Naive thymus-derived CD8-positive, alpha-beta T cell (primary cell): ENCODE measurements at regions of chr12 and their contacts with region 1.

Region 1: DNA sequence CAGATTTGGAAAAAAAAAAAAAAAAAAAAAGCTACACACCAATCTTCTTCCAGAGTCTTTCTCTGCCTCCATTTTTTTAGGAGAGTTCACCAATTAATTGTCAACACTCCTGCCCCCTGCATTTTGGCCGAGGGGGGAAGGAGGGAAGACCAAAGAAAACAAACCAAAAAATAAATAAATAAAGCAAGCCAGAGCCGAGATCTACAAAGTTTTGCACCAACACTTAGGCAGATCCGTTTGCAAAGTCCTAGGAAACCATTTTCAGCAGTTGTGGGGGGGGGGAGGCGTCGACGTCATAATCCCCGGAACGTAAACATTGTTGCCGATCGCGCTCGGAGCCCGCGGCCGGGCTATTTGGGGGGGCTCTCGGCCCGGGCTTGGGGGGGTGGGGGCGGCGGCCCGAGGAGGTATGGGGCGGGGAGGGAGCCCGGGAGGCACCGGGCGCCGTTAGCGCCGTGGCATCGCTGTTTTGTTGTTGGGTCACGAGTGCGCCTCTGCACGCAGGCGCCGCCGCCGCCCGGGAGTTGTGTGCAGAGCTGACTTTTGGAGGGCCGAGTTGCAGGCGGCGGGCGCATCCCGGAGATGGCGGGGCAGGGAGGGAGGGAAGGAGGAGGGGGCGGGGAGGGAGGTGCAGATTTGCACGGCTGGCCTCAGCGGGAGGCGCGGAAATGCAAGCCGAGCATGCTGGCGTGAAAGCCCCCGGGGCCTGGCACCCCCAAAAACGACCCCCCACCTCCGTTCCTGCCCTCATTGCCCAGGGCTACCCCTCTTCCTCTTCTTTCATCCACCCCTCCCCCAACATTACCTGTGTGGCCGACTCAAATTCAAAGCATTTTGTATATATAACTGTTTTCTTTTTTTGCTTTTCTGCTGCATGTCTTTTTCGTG is 598 bp downstream of the KDM2B start:
- DNase-seq: peak; percentile 59 to 88 (median 70)
- ATAC-seq: peak; percentile 65 to 66
- H3K4me3 Mint-ChIP-seq: peak overlapping the region; percentile 95 to 99 (median 97)
- H3K27ac Mint-ChIP-seq: peak overlapping the region; percentile 91 to 100 (median 99)
- H3K4me1 Mint-ChIP-seq: peaks cover 20 to 45% (median 36%) of the 10 kb centered on the region in 4 donors
- H3K27me3 Mint-ChIP-seq: no peaks in the 10 kb centered on the region

Region 2: DNA sequence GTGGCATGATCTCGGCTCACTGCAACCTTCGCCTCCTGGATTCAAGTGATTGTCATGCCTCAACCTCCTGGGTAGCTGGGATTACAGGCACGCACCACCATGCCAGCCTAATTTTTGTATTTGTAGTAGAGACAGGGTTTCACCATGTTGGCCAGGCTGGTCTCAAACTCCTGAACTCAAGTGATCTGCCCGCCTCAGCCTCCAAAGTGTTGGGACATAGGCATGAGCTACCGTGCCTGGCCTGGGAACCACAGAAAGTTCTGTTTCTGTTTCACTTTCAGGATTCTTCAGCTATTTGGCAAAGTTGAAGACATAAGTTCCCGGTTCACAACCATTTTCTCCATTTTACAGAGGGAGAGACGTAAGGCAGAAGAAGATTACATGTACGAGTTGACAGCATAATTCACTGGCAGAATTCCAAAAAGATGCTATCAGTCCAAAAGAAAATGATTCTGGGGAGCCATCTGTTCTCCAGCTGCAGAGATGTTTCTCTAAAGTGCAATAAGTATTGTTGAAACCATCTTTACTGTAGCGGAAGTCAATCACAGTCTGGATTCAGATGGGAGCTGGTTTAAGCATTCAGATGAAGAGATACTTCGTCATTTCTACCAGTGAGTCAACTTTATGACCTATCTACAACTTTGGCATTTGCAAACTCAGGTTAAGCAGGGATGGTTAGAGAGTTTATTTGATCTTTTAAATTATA is 188.5 kb before region 1 on chr12:
- POLR2A ChIA-PET with region 1: no interaction called
- DNase-seq: no peak
- ATAC-seq: no peak
- H3K4me3 Mint-ChIP-seq: peak overlapping the region in 7 of 10 donors; percentile 2 to 63 (median 21)
- H3K27ac Mint-ChIP-seq: peak overlapping the region in 4 of 10 donors; percentile 11 to 58 (median 41)
- H3K4me1 Mint-ChIP-seq: peaks cover 2 to 10% (median 6%) of the 10 kb centered on the region in 4 donors
- H3K27me3 Mint-ChIP-seq: no peaks in the 10 kb centered on the region

Region 3: DNA sequence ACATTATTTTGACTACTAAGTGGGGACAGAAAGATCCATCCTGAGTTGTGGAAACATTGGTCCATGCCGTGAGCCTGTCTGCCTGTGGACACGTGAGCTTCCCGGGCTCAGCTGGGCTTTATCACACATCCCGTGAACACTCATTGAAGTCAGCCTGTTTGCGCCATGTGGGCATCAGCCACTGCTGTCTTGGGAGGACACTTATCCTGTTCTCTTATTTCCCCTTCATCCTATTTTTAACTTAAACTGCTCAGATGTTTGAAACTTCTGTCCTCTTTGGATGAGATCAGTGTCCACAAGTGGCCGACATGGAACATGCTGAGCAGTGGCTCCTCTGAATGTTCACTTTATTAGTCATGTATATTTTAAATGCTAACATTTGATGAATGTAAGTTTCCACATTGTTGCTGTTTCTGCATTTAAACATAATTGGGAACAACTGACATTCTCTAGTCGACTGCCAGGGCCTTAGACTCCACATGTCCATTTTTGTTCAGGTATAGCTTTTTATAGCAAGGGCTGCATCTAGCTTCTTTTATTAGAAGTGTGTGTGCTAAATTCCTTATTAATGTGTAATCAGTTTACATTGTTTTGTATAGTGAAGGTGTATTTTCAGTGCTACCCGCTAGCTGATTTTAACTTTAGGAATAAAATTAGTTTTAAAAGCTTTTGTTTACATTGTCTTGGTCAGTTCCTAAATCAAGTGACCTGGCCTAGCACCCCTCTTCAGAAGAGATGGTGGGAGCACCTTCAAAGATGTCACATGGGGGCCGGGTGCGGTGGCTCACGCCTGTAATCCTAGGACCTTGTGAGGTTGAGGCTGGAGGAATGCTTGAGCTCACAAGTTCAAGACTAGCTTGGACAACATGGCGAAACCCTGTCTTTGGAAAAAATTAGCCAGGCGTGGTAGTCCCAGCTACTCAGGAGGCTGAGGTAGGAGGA is 156.3 kb before region 1 on chr12:
- POLR2A ChIA-PET with region 1: no interaction called
- DNase-seq: no peak
- ATAC-seq: no peak
- H3K4me3 Mint-ChIP-seq: no peak overlapping the region
- H3K27ac Mint-ChIP-seq: peak overlapping the region in 8 of 10 donors; percentile 2 to 77 (median 47)
- H3K4me1 Mint-ChIP-seq: peaks cover 6 to 14% (median 11%) of the 10 kb centered on the region in 4 donors
- H3K27me3 Mint-ChIP-seq: no peaks in the 10 kb centered on the region

Region 4: GRCh38 chr12:121443193-121443870 is 136.9 kb before region 1 on chr12:
- POLR2A ChIA-PET with region 1: no interaction called
- DNase-seq: peak in 9 of 10 donors; percentile 31 to 61 (median 55)
- ATAC-seq: peak; percentile 76 to 89
- H3K4me3 Mint-ChIP-seq: no peak overlapping the region
- H3K27ac Mint-ChIP-seq: peak overlapping the region in 4 of 10 donors; percentile 40 to 78 (median 65)
- H3K4me1 Mint-ChIP-seq: peaks cover 2 to 10% (median 7%) of the 10 kb centered on the region in 4 donors
- H3K27me3 Mint-ChIP-seq: no peaks in the 10 kb centered on the region

Region 5: GRCh38 chr12:121536899-121537813 is 43.1 kb before region 1 on chr12:
- POLR2A ChIA-PET with region 1: interaction called, 44 read pairs
- DNase-seq: peak; percentile 31 to 74 (median 51)
- ATAC-seq: peak in 1 of 2 donors; percentile 5
- H3K4me3 Mint-ChIP-seq: peak overlapping the region; percentile 72 to 92 (median 78)
- H3K27ac Mint-ChIP-seq: peak overlapping the region; percentile 85 to 99 (median 95)
- H3K4me1 Mint-ChIP-seq: peaks cover 19 to 66% (median 51%) of the 10 kb centered on the region in 4 donors
- H3K27me3 Mint-ChIP-seq: no peaks in the 10 kb centered on the region

Region 6: DNA sequence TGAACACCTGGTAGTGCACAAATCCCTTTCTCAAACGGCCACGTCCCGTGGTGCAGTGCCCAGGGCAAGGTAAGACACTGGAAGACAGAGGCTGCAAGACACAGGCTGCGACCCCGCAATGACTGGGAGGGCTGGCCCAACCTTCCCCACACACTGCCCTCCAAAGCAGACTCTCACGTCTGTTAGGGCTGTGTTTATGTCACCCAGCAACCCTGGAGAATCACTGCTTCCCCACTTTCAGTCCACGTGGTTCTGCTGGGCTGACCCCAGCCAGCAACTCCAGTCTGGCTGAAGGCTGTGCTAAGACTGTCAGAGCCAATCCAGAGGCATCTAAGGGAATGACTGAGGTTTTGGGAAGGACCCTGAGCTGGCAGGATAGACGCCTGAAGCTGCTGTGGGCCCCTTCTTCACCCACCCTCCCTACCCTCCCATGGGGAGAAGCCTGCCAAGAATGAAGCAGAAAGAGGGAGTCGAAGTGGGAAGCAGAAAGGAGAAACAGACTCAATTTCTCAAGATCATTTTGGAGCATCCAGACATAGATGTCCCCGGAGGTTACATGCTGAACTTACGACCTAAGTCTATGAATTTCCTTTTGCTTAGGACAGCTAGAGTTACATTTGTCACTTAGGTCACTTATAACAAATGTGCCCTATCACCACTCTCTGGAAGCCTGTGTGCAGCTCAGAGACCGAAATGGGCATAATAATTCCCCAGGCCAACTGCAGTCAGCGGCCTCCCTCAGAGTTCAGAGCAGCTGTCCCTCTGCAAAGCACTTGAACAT is 11.1 kb before region 1 on chr12:
- POLR2A ChIA-PET with region 1: interaction called, 17 read pairs
- DNase-seq: no peak
- ATAC-seq: peak; percentile 20 to 36
- H3K4me3 Mint-ChIP-seq: no peak overlapping the region
- H3K27ac Mint-ChIP-seq: peak overlapping the region in 7 of 10 donors; percentile 26 to 74 (median 40)
- H3K4me1 Mint-ChIP-seq: peaks cover 15 to 32% (median 23%) of the 10 kb centered on the region in 4 donors
- H3K27me3 Mint-ChIP-seq: no peaks in the 10 kb centered on the region

Region 7: GRCh38 chr12:121637231-121637914 is 57.1 kb after region 1 on chr12:
- POLR2A ChIA-PET with region 1: interaction called, 34 read pairs
- DNase-seq: peak; percentile 23 to 78 (median 52)
- ATAC-seq: peak; percentile 72 to 84
- H3K4me3 Mint-ChIP-seq: peak overlapping the region; percentile 64 to 85 (median 78)
- H3K27ac Mint-ChIP-seq: peak overlapping the region; percentile 82 to 97 (median 94)
- H3K4me1 Mint-ChIP-seq: peaks cover 24 to 82% (median 65%) of the 10 kb centered on the region in 4 donors
- H3K27me3 Mint-ChIP-seq: no peaks in the 10 kb centered on the region

Region 8: GRCh38 chr12:121688966-121689365 is 108.7 kb after region 1 on chr12:
- POLR2A ChIA-PET with region 1: interaction called, 13 read pairs
- DNase-seq: no peak
- ATAC-seq: no peak
- H3K4me3 Mint-ChIP-seq: peak overlapping the region in 1 of 10 donors; percentile 7
- H3K27ac Mint-ChIP-seq: peak overlapping the region in 6 of 10 donors; percentile 27 to 68 (median 48)
- H3K4me1 Mint-ChIP-seq: peaks cover 4 to 13% (median 11%) of the 10 kb centered on the region in 4 donors
- H3K27me3 Mint-ChIP-seq: no peaks in the 10 kb centered on the region

Region 9: DNA sequence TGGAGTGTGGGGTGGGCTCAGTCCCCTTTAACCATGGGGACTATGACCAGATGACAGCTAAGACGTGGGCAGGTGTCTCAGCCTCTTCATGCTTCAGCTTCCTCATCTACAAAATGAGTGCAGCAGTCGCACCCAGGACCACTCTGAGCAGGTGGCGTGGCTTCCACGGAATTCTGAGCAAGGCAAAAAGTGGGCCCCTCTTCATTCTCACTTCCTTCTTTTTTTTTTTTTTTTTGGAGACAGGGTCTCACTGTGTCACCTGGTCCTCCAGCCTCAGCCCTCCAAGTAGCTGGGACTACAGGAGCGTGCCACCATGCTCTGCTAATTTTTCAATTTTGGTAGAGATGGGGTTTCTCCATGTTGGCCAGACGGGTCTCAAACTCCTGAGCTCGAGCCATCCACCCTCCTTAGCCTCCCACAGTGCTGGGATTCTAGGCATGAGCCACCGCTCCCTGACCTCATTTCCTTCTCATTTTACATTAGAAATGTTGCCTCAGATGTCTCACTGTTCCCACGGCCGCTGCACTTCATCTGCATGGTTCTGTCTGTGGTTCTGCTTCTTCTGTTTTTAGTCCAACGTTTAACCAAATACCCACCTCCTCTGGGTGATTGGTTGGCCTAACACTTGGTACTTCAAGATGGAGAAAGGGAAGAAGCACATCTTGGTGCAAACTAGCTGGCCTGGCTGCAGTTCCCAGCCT is 400.1 kb after region 1 on chr12:
- POLR2A ChIA-PET with region 1: no interaction called
- DNase-seq: no peak
- ATAC-seq: peak in 1 of 2 donors; percentile 20
- H3K4me3 Mint-ChIP-seq: peak overlapping the region in 1 of 10 donors; percentile 42
- H3K27ac Mint-ChIP-seq: peak overlapping the region in 2 of 10 donors; percentile 47 to 60
- H3K4me1 Mint-ChIP-seq: peaks cover 0 to 41% (median 3%) of the 10 kb centered on the region in 4 donors
- H3K27me3 Mint-ChIP-seq: peaks cover 0 to 3% (median 0%) of the 10 kb centered on the region in 5 donors